ENCODE measurements at regions of chr16 and their contacts with region 1.

Region 1: DNA sequence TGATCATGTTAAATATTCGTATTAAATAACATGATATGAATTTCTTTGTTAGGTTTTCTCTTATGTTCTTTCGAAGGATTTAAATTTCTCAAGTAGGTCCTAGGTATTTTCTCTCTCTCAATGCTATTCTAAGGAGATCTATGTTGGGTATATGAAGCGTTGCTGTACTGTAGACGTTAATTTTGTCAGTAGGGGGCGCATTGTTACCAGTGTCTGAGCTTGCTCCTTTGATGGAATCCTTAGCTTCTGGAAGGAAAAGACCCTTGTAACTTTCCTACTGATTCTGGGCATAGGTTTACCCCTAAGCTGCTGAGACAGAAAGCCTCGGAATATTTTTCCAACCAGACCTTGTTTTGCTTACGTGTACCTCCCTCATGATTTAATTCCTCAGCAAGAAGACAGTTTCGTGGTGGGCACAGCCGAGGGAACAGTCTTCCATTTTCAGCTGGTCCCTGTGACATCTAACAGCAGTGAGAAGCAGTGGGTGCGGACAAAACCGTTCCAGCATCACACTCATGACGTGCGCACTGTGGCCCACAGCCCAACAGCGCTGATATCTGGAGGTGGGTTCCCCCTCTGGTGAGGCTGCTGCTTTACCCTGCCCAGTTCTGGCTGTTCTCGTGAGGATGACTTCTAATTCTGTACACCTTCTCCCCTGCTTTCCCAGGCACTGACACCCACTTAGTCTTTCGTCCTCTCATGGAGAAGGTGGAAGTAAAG is 17.9 kb downstream of the UTP4 start:
- DNase-seq: peak; percentile 67
- H3K4me3 ChIP-seq: no peak overlapping the region; a peak in 1 of 4 replicates
- H3K27ac ChIP-seq: no peak overlapping the region
- H3K4me1 ChIP-seq: no peaks in the 10 kb centered on the region
- H3K27me3 ChIP-seq: no peaks in the 10 kb centered on the region
- CTCF ChIP-seq: peak; percentile 93
- EP300 ChIP-seq: no peak
- RAD21 ChIP-seq: peak; percentile 93

Region 2: GRCh38 chr16:69132424-69133252 is 17.7 kb before region 1 on chr16 and contains the starts of genes CHTF8 and UTP4:
- CTCF ChIA-PET with region 1: interaction called, 11 read pairs
- POLR2A ChIA-PET with region 1: interaction called, 4 read pairs
- DNase-seq: peak; percentile 92
- H3K4me3 ChIP-seq: peak within 1 kb of the TSS; percentile 85 to 88
- H3K27ac ChIP-seq: peak within 1 kb of the TSS; percentile 86 to 97
- H3K4me1 ChIP-seq: peaks cover 11 to 14% of the 10 kb centered on the region in 2 experiments; a peak in 3 of 4 replicates
- H3K27me3 ChIP-seq: no peaks in the 10 kb centered on the region
- CTCF ChIP-seq: no peak
- EP300 ChIP-seq: 0 out of 4 replicates have a peak, but pooled peaks of 1 of the 2 experiments have one; percentile 8
- RAD21 ChIP-seq: no peak
- polyA plus RNA-seq, gene CHTF8: 83.0 and 96.6 TPM in 2 replicates
- polyA plus RNA-seq, gene UTP4: 66.5 and 91.7 TPM in 2 replicates

Region 3: GRCh38 chr16:69166221-69166833 is 16.0 kb after region 1 on chr16:
- CTCF ChIA-PET with region 1: interaction called, 13 read pairs
- POLR2A ChIA-PET with region 1: no interaction called
- DNase-seq: no peak
- H3K4me3 ChIP-seq: no peak overlapping the region
- H3K27ac ChIP-seq: peak overlapping the region in 1 of 2 experiments; percentile 73; a peak in 2 of 4 replicates
- H3K4me1 ChIP-seq: peaks cover 2 to 21% of the 10 kb centered on the region in 2 experiments; a peak in 3 of 4 replicates
- H3K27me3 ChIP-seq: no peaks in the 10 kb centered on the region
- CTCF ChIP-seq: no peak
- EP300 ChIP-seq: no peak
- RAD21 ChIP-seq: no peak

Region 4: GRCh38 chr16:69286941-69287713 is 136.8 kb after region 1 on chr16:
- CTCF ChIA-PET with region 1: interaction called, 95 read pairs
- POLR2A ChIA-PET with region 1: no interaction called
- DNase-seq: peak; percentile 39
- H3K4me3 ChIP-seq: no peak overlapping the region
- H3K27ac ChIP-seq: no peak overlapping the region
- H3K4me1 ChIP-seq: peaks cover 0 to 5% of the 10 kb centered on the region in 2 experiments; a peak in 1 of 4 replicates
- H3K27me3 ChIP-seq: no peaks in the 10 kb centered on the region
- CTCF ChIP-seq: peak; percentile 67
- EP300 ChIP-seq: no peak
- RAD21 ChIP-seq: peak; percentile 73

Region 5: DNA sequence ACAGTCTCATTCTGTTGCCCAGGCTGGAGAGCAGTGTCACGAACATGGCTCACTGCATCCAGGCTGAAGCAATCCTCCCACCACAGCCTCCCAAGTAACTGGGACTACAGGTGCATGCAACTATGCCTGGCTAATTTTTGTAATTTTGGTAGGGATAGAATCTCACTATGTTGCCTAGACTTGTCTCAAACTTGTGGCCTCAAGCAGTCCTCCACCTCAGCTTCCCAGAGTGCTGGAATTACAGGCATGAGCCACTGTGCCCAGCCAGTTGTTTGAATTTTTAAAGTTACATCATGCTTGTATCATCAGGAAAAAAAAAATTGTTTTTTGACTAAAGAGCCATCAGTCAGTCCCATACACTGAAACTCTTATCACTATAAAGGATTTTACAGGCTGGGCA is 143.7 kb after region 1 on chr16:
- CTCF ChIA-PET with region 1: interaction called, 95 read pairs
- POLR2A ChIA-PET with region 1: no interaction called
- DNase-seq: no peak
- H3K4me3 ChIP-seq: no peak overlapping the region
- H3K27ac ChIP-seq: no peak overlapping the region
- H3K4me1 ChIP-seq: no peaks in the 10 kb centered on the region
- H3K27me3 ChIP-seq: no peaks in the 10 kb centered on the region
- CTCF ChIP-seq: no peak
- EP300 ChIP-seq: no peak
- RAD21 ChIP-seq: no peak